ENCODE measurements at regions of chr18 and their contacts with region 1.

Region 1: GRCh38 chr18:59837586-59837985 is 62.2 kb upstream of the PMAIP1 start:
- DNase-seq: peak; percentile 59
- ATAC-seq: peak; percentile 51
- H3K4me3 Mint-ChIP-seq: no peak overlapping the region
- H3K27ac Mint-ChIP-seq: no peak overlapping the region
- H3K4me1 Mint-ChIP-seq: no peaks in the 10 kb centered on the region
- H3K27me3 Mint-ChIP-seq: peaks cover 13% of the 10 kb centered on the region

Region 2: DNA sequence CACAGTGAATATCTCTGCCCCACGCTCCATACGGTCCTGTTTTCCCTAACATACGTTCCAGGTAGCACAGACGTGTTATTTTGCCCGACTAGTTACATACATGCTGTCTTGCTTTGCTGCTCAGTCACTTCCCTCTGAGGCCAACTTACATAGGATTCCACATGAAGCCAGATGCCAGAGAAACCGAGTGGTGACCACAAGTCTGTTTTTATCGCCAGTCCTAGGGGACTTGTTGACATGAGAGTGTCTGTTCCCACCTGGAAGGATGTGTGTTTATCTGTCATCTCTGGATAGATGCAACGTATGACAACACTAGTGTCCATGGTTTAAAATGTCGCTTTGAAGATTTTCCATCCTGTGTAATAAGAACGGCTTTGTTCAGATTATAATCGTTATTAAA is 94.8 kb after region 1 on chr18:
- CTCF ChIA-PET with region 1: interaction called, 10 read pairs
- POLR2A ChIA-PET with region 1: no interaction called
- DNase-seq: no peak
- ATAC-seq: no peak
- H3K4me3 Mint-ChIP-seq: no peak overlapping the region
- H3K27ac Mint-ChIP-seq: no peak overlapping the region
- H3K4me1 Mint-ChIP-seq: peaks cover 3% of the 10 kb centered on the region
- H3K27me3 Mint-ChIP-seq: peaks cover 21% of the 10 kb centered on the region

Region 3: DNA sequence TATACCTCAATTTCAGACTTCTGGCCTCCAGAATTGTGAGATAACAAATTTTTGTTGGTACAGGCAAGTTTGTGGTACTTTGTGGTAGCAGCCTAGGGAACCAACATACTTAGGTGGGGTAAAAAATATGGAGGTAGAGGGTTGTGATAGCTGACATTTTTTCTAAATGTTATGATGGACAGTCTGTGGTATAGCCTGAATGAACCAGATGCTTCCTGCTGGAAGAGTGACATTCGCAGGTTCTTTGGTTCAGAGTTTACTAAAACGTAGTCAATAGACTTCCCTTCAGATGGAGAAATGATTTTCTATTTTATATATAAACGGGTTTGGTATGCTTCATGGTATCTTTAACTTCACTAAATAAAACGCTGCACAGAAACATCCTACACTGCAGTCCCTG is 105.0 kb after region 1 on chr18:
- CTCF ChIA-PET with region 1: no interaction called
- POLR2A ChIA-PET with region 1: no interaction called
- DNase-seq: no peak
- ATAC-seq: no peak
- H3K4me3 Mint-ChIP-seq: no peak overlapping the region
- H3K27ac Mint-ChIP-seq: no peak overlapping the region
- H3K4me1 Mint-ChIP-seq: no peaks in the 10 kb centered on the region
- H3K27me3 Mint-ChIP-seq: peaks cover 18% of the 10 kb centered on the region

Region 4: DNA sequence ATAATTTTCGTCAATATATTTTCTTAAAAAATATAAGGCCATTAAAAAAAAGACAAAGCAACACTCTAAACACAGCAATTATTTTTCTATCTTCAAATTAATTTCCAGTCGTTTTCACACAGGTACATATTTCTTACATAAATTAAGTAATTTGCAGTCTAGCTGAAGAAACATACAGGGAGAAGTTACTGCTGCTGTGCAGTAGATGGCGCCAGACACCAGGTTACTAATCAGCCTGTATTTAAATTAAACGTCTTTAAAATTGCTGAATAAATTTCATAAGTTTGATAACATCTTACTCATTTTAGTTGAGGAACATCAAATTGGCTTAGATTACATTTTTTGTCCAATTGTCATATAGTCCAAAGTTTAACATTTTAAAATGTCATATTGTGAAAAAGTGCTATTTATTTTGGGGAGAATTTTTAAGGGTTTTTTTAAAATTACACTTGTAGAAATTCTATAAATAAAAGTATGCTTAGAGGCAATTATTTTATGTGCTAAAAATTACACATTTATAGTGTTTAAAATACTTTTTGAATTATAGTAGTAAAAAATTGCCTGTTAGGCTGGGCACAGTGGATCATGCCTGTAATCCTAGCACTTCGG is 150.6 kb after region 1 on chr18:
- CTCF ChIA-PET with region 1: interaction called, 27 read pairs
- POLR2A ChIA-PET with region 1: no interaction called
- DNase-seq: peak; percentile 69
- ATAC-seq: no peak
- H3K4me3 Mint-ChIP-seq: no peak overlapping the region
- H3K27ac Mint-ChIP-seq: no peak overlapping the region
- H3K4me1 Mint-ChIP-seq: no peaks in the 10 kb centered on the region
- H3K27me3 Mint-ChIP-seq: peaks cover 16% of the 10 kb centered on the region

Region 5: DNA sequence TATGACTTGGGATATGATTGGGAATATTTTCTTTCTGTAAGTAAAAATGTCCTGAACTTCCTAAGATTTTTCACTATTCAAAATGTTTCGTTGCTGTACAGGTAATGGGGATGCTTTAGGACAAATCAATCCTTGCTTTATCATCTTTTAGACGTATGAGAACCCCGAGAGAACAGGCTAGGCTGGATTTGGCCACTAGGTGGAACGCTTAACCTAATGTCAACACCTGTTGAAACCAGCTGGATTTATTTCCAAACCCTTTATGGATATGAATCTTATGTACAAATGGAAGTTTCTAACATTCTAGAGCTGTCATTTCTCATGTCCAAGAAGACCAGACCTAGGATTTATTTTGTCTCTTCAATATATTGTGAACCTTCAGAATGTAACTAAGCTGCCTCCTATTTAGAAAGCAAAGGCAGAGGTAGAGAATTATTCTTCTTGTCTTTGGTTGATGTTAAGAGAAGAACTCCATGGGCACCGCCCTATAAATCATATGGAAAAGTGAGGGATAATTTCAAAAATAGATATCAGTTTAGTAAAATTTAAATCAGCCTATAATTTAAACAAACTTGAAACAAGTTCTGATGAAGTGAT is 158.9 kb after region 1 on chr18:
- CTCF ChIA-PET with region 1: interaction called, 10 read pairs
- POLR2A ChIA-PET with region 1: no interaction called
- DNase-seq: peak; percentile 25
- ATAC-seq: peak; percentile 51
- H3K4me3 Mint-ChIP-seq: no peak overlapping the region
- H3K27ac Mint-ChIP-seq: no peak overlapping the region
- H3K4me1 Mint-ChIP-seq: no peaks in the 10 kb centered on the region
- H3K27me3 Mint-ChIP-seq: peaks cover 39% of the 10 kb centered on the region

Region 6: DNA sequence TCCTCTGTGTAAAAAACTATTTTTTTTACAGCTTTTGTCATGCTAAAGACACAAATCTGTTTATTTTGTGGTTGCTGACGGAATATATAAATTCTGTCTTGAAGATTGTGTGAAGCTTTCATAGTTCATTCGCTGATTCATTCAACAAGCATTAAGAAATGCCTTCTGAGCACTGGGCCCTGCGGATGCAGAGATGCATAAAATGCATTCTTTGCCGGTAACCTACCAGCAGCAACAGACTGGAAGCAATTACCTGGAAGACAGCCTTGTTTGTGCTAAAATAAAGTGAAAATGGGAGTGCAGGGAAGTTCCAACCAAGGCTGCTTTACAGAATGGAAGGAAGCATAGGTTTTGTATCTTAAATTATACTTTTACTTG is 181.9 kb after region 1 on chr18:
- CTCF ChIA-PET with region 1: no interaction called
- POLR2A ChIA-PET with region 1: no interaction called
- DNase-seq: no peak
- ATAC-seq: no peak
- H3K4me3 Mint-ChIP-seq: no peak overlapping the region
- H3K27ac Mint-ChIP-seq: no peak overlapping the region
- H3K4me1 Mint-ChIP-seq: no peaks in the 10 kb centered on the region
- H3K27me3 Mint-ChIP-seq: peaks cover 2% of the 10 kb centered on the region